Mammary epithelial cell (primary cell): ENCODE measurements at regions of chr4 and their contacts with region 1.

Region 1: DNA sequence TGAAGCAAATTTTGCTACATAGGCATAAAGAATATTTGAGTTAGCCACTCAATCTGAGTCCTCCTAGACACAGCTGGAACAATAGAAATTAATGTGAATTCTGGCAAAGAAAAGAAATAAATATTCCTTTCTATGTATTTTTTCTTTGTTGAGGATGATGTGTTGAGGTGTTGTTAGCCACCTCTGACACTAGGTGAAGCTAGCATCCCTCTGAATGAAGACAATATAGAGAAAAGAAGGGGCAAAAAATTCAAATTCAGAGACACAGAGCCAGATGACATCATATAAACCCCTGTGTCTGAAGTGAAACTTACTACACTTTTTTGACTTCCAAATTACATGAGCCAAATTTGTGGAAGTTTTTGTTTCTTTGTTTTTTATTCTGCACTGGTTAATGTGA is 34.6 kb upstream of the TMPRSS11D start:
- DNase-seq: peak; percentile 8
- H3K4me3 ChIP-seq: no peak overlapping the region
- H3K27ac ChIP-seq: no peak overlapping the region
- H3K4me1 ChIP-seq: no peaks in the 10 kb centered on the region
- H3K27me3 ChIP-seq: no peaks in the 10 kb centered on the region
- CTCF ChIP-seq: peak; percentile 74 to 77

Region 2: GRCh38 chr4:66804979-66805378 is 1113.4 kb before region 1 on chr4:
- CTCF ChIA-PET with region 1: no interaction called
- dilution Hi-C with region 1: no loop called
- in situ Hi-C with region 1: no loop called
- intact Hi-C with region 1: no loop called
- DNase-seq: no peak
- H3K4me3 ChIP-seq: no peak overlapping the region
- H3K27ac ChIP-seq: no peak overlapping the region
- H3K4me1 ChIP-seq: no peaks in the 10 kb centered on the region
- H3K27me3 ChIP-seq: no peaks in the 10 kb centered on the region
- CTCF ChIP-seq: no peak

Region 3: GRCh38 chr4:67674096-67674495 is 244.3 kb before region 1 on chr4:
- CTCF ChIA-PET with region 1: no interaction called
- dilution Hi-C with region 1: no loop called
- in situ Hi-C with region 1: no loop called
- intact Hi-C with region 1: no loop called
- DNase-seq: no peak
- H3K4me3 ChIP-seq: no peak overlapping the region
- H3K27ac ChIP-seq: no peak overlapping the region
- H3K4me1 ChIP-seq: no peaks in the 10 kb centered on the region
- H3K27me3 ChIP-seq: no peaks in the 10 kb centered on the region
- CTCF ChIP-seq: peak in 1 of 2 donors; percentile 4

Region 4: DNA sequence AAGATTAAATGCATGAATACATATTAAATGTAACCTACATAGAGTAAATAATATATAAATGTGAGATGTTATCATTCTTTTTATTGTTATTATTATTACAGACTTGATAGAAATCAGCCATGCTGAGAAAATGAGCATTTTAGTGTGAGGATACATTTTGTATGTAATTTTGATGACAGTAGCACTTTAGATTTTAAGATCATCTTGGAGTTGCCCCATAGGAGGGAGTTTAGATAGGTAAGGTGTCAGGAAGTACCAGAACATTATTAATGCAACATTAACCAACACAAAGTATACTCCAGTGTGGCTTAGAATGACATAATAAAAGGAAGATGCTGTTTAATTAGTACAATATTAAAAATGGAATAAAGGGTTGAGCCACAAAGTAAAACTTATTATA is 36.5 kb after region 1 on chr4:
- CTCF ChIA-PET with region 1: no interaction called
- dilution Hi-C with region 1: no loop called
- in situ Hi-C with region 1: no loop called
- intact Hi-C with region 1: no loop called
- DNase-seq: no peak
- H3K4me3 ChIP-seq: no peak overlapping the region
- H3K27ac ChIP-seq: no peak overlapping the region
- H3K4me1 ChIP-seq: no peaks in the 10 kb centered on the region
- H3K27me3 ChIP-seq: no peaks in the 10 kb centered on the region
- CTCF ChIP-seq: no peak

Region 5: DNA sequence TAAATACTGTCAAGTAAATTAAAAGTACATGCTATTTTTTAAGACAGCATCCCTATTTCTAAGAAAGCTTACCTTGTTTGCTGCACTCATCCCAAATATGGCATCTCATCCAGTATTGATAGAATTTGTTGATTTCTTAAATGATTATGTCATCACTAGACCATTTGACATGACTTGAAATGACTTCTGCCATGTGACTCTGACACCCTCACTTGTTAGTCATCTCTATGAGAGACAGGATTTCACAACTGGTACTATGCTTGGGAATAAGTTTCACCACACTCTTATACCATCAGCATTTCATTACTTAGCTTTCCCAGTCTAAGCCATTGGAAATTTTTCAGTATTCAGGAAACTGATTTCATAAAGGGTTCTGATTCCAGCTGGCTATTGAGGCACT is 156.0 kb after region 1 on chr4:
- CTCF ChIA-PET with region 1: no interaction called
- dilution Hi-C with region 1: no loop called
- in situ Hi-C with region 1: no loop called
- intact Hi-C with region 1: loop called (anchors 2 kb)
- DNase-seq: peak; percentile 83
- H3K4me3 ChIP-seq: no peak overlapping the region
- H3K27ac ChIP-seq: no peak overlapping the region
- H3K4me1 ChIP-seq: peaks cover 5% of the 10 kb centered on the region
- H3K27me3 ChIP-seq: no peaks in the 10 kb centered on the region
- CTCF ChIP-seq: no peak